CD14-positive monocyte (primary cell): ENCODE measurements at regions of chr7 and their contacts with region 1.

Region 1: DNA sequence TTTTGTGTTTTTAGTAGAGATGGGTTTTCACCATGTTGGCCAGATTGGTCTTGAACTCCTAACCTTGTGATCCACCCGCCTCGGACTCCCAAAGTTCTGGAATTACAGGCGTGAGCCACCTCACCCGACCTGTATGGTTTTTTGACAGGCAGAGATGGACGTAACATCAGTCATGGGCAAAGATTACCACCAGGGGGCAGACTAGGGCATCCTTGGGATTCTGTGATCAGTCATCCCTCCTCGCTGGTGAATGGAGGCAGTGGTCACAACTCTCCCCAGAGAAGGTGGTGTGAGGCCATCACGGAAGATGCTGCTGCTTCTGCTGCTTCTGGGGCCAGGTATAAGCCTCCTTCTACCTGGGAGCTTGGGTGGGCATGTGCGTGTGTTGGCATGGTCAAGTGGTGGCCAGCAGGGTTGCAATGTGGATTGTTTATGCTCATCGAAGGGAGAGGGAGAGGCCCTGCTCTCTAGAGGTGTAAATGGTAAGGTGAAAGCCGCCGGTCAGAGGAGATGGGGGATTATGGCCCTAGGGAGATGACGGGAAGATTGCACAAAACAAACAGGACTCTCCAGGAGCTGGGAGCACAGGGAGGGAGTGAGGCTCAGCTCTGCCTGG is 122.7 kb upstream of the PRSS1 start:
- DNase-seq: peak; percentile 44 to 66 (median 61)
- H3K4me3 ChIP-seq: no peak overlapping the region
- H3K4me3 Mint-ChIP-seq: peak overlapping the region; percentile 45 to 82
- H3K27ac ChIP-seq: no peak overlapping the region
- H3K27ac Mint-ChIP-seq: peak overlapping the region in 1 of 7 donors; percentile 66
- H3K4me1 ChIP-seq: peaks cover 6 to 7% of the 10 kb centered on the region in 2 donors
- H3K4me1 Mint-ChIP-seq: peaks cover 10% of the 10 kb centered on the region
- H3K27me3 ChIP-seq: no peaks in the 10 kb centered on the region
- H3K27me3 Mint-ChIP-seq: peaks cover 2 to 9% (median 6%) of the 10 kb centered on the region in 3 donors
- CTCF ChIP-seq: peak; percentile 82

Region 2: GRCh38 chr7:142811154-142811737 is 184.7 kb after region 1 on chr7:
- intact Hi-C with region 1: loop called in 1 of 2 experiments (anchors 5 kb)
- DNase-seq: peak; percentile 12 to 50 (median 28)
- H3K4me3 ChIP-seq: no peak overlapping the region
- H3K4me3 Mint-ChIP-seq: no peak overlapping the region
- H3K27ac ChIP-seq: no peak overlapping the region
- H3K27ac Mint-ChIP-seq: no peak overlapping the region
- H3K4me1 ChIP-seq: no peaks in the 10 kb centered on the region
- H3K4me1 Mint-ChIP-seq: no peaks in the 10 kb centered on the region
- H3K27me3 ChIP-seq: peaks cover 5 to 6% of the 10 kb centered on the region in 2 donors
- H3K27me3 Mint-ChIP-seq: peaks cover 0 to 15% (median 4%) of the 10 kb centered on the region in 3 donors
- CTCF ChIP-seq: peak; percentile 76